CD14-positive monocyte (primary cell): ENCODE measurements at regions of chr2 and their contacts with region 1.

Region 1: DNA sequence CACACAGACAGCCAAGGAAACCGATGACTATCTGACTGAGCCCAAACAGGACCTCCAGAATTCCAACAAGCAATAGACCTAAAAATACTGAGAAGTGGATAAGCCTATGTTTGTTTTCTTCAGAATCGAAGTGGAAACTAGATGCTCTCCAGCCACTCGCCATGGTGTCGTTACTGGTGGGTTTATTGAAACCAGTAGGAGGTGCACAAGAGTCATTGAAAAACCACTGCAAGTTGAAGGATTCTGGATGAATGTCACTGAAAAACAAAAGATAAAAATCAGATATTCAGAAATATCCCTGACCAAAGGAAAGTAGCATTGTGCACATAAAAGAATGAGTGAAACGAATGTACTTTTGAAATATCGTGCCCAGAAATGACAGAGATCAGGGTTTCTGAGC is 15.3 kb downstream of the TM4SF20 start:
- DNase-seq: peak; percentile 24 to 53 (median 51)
- H3K4me3 ChIP-seq: no peak overlapping the region
- H3K4me3 Mint-ChIP-seq: no peak overlapping the region
- H3K27ac ChIP-seq: no peak overlapping the region
- H3K27ac Mint-ChIP-seq: no peak overlapping the region
- H3K4me1 ChIP-seq: peaks cover 26% of the 10 kb centered on the region in 2 donors
- H3K4me1 Mint-ChIP-seq: peaks cover 22% of the 10 kb centered on the region
- H3K27me3 ChIP-seq: no peaks in the 10 kb centered on the region
- H3K27me3 Mint-ChIP-seq: peaks cover 0 to 2% (median 0%) of the 10 kb centered on the region in 3 donors
- CTCF ChIP-seq: peak; percentile 80

Region 2: GRCh38 chr2:227383686-227384085 is 19.9 kb after region 1 on chr2:
- intact Hi-C with region 1: loop called in 1 of 2 experiments (anchors 2 kb)
- DNase-seq: no peak
- H3K4me3 ChIP-seq: no peak overlapping the region
- H3K4me3 Mint-ChIP-seq: no peak overlapping the region
- H3K27ac ChIP-seq: no peak overlapping the region
- H3K27ac Mint-ChIP-seq: peak overlapping the region in 2 of 7 donors; percentile 1 to 42
- H3K4me1 ChIP-seq: peaks cover 19 to 22% of the 10 kb centered on the region in 2 donors
- H3K4me1 Mint-ChIP-seq: peaks cover 23% of the 10 kb centered on the region
- H3K27me3 ChIP-seq: no peaks in the 10 kb centered on the region
- H3K27me3 Mint-ChIP-seq: peaks cover 0 to 10% (median 0%) of the 10 kb centered on the region in 3 donors
- CTCF ChIP-seq: no peak

Region 3: DNA sequence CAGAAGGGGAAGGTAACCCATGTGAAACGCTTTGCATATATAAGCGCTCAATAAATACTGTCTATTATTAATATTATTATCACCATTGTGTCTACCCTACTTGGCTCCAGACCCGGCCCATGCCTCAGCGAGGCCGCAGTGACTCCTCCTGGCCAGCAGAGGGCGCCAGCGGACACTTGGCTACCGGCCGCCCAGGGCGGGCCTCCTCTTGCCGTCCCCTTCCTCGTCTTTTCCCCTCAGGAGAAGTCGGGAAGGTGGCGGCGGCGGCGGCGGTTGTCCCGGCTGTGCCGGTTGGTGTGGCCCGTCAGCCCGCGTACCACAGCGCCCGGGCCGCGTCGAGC is 108.1 kb after region 1 on chr2 and contains the start of gene AGFG1:
- intact Hi-C with region 1: loop called (anchors 5 to 10 kb)
- DNase-seq: peak; percentile 74 to 80 (median 76)
- H3K4me3 ChIP-seq: peak within 1 kb of the TSS; percentile 74 to 97 (median 92)
- H3K4me3 Mint-ChIP-seq: peak within 1 kb of the TSS; percentile 93 to 97
- H3K27ac ChIP-seq: peak within 1 kb of the TSS; percentile 68 to 90
- H3K27ac Mint-ChIP-seq: peak within 1 kb of the TSS; percentile 33 to 96 (median 88)
- H3K4me1 ChIP-seq: peaks cover 28 to 35% of the 10 kb centered on the region in 2 donors
- H3K4me1 Mint-ChIP-seq: peaks cover 34% of the 10 kb centered on the region
- H3K27me3 ChIP-seq: no peaks in the 10 kb centered on the region
- H3K27me3 Mint-ChIP-seq: peaks cover 0 to 2% (median 0%) of the 10 kb centered on the region in 3 donors
- CTCF ChIP-seq: peak; percentile 96
- polyA plus RNA-seq, gene AGFG1: 17.3 to 76.1 (median 56.9) TPM

Region 4: GRCh38 chr2:227608561-227609338 is 245.0 kb after region 1 on chr2:
- intact Hi-C with region 1: no loop called
- DNase-seq: peak; percentile 80 to 87 (median 83)
- H3K4me3 ChIP-seq: peak overlapping the region in 1 of 3 experiments; percentile 43
- H3K4me3 Mint-ChIP-seq: peak overlapping the region in 1 of 2 donors; percentile 64
- H3K27ac ChIP-seq: no peak overlapping the region
- H3K27ac Mint-ChIP-seq: peak overlapping the region in 2 of 7 donors; percentile 31 to 33
- H3K4me1 ChIP-seq: peaks cover 16% of the 10 kb centered on the region in 2 donors
- H3K4me1 Mint-ChIP-seq: peaks cover 20% of the 10 kb centered on the region
- H3K27me3 ChIP-seq: peaks cover 29 to 35% of the 10 kb centered on the region in 2 donors
- H3K27me3 Mint-ChIP-seq: peaks cover 28 to 46% (median 45%) of the 10 kb centered on the region in 3 donors
- CTCF ChIP-seq: no peak